ENCODE measurements at regions of chr10 and their contacts with region 1.

Region 1: GRCh38 chr10:98391578-98391991 is 23.4 kb downstream of the PYROXD2 start:
- DNase-seq: peak in 4 of 10 donors; percentile 35 to 88 (median 51)

Region 2: DNA sequence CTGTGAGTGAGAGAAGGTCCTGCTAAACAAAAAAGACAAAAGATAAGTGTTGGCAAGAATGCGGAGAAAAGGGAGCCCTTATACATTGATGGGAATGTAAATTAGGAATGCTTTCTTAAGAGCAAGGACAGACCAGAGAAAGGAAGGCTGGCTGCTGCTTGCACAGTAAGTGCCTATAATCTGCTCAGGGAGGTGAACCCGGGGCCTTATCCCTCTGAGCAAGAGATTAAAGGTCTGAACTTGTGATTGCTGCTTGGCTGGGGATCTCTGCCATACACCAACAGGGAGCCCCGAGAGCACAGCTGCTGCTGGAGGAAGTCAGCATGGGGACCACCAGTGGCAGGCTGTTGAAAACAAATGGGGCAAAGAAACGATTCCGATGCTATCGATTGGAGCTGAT is 329.2 kb before region 1 on chr10:
- intact Hi-C with region 1: no loop called
- DNase-seq: no peak

Region 3: DNA sequence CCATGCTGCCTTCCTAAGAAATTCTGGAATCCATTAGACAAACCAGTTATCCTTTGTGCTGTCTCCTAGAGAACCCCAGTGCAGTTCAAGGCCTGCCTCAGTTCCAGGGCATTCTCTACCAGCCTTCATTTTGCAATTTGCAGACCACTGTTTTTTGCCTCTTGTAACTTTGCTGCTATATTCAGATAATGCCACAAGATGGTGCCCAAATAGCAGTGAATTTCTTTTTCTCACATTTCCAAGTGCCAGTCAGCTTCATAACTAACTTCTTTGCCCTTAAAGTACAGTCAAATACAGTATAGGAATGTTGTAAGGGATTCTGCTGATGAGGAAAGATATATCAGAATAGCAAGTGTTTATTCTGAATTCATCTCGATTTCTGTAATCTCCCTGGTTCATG is 148.8 kb before region 1 on chr10:
- intact Hi-C with region 1: loop called (anchors 5 kb)
- DNase-seq: no peak

Measured in posterior cingulate gyrus (tissue), 11 donors.